ENCODE measurements at regions of chr12 and their contacts with region 1.

Region 1: GRCh38 chr12:118164798-118165486 is 29.0 kb downstream of the PEBP1 start:
- DNase-seq: no peak
- H3K4me3 ChIP-seq: no peak overlapping the region
- H3K27ac ChIP-seq: no peak overlapping the region
- H3K4me1 ChIP-seq: peaks cover 0 to 3% (median 0%) of the 10 kb centered on the region in 4 experiments; a peak in 1 of 7 replicates
- H3K27me3 ChIP-seq: no peaks in the 10 kb centered on the region
- CTCF ChIP-seq: peak; percentile 32 to 67 (median 65)
- EP300 ChIP-seq: no peak
- POLR2A ChIP-seq: no peak
- RAD21 ChIP-seq: peak; percentile 88 to 90

Region 2: DNA sequence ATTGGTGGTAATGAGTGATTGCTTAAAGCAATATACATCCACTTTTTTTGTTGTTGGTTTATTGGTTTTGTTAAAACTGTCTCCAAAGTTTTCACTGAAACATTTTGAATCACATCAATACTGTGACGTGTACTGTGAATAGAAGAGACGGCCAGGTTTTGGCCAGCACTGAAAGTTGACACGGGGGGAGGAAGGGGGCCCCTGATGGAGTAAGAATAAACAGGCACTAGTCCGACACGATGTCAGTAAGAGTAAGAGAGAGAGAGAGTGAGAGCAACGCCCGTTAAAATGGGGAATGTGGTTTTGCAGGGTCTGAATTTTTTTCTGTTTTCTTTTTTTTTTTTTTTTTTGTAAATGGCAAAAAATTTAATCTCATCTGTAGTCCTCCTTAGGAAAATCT is 14.3 kb before region 1 on chr12:
- CTCF ChIA-PET with region 1: interaction called, 37 read pairs
- POLR2A ChIA-PET with region 1: interaction called, 6 read pairs
- DNase-seq: no peak
- H3K4me3 ChIP-seq: no peak overlapping the region
- H3K27ac ChIP-seq: no peak overlapping the region
- H3K4me1 ChIP-seq: no peaks in the 10 kb centered on the region
- H3K27me3 ChIP-seq: no peaks in the 10 kb centered on the region
- CTCF ChIP-seq: no peak
- EP300 ChIP-seq: no peak
- POLR2A ChIP-seq: no peak
- RAD21 ChIP-seq: no peak

Region 3: DNA sequence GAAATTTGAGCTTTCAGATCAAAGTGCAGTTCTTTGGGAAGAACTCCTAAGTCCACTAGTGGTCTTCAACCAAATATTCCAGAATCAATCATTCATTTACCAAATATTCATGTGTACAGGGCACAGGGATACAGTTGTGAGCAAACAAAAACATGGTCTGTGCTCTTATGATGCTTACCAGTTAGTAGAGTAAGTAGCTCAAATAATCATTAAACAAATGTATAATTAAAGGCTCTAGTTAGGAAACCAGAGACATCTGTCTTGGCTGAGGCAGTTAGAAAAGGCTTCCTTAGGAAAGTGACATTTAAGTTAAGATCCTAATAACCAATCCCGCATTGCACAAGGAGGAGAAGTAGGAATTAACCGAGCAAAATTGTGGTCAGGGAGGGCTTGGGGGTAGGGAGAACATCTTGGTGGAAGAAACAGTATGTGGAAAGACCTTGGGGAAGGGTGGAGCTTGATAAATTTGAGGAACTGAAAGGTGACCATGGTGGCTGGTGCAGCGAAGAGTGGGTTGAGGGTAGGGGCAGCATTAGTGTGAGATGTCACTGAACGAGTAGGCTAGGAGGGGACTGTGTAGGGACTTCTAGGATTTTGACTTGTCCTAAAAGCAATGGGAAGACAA is 11.0 kb after region 1 on chr12:
- CTCF ChIA-PET with region 1: interaction called, 68 read pairs
- POLR2A ChIA-PET with region 1: no interaction called
- DNase-seq: no peak
- H3K4me3 ChIP-seq: no peak overlapping the region
- H3K27ac ChIP-seq: no peak overlapping the region
- H3K4me1 ChIP-seq: no peaks in the 10 kb centered on the region
- H3K27me3 ChIP-seq: no peaks in the 10 kb centered on the region
- CTCF ChIP-seq: no peak
- EP300 ChIP-seq: no peak
- POLR2A ChIP-seq: no peak
- RAD21 ChIP-seq: no peak

Region 4: GRCh38 chr12:118187751-118188435 is 23.0 kb after region 1 on chr12:
- CTCF ChIA-PET with region 1: interaction called, 68 read pairs
- POLR2A ChIA-PET with region 1: no interaction called
- DNase-seq: no peak
- H3K4me3 ChIP-seq: no peak overlapping the region
- H3K27ac ChIP-seq: no peak overlapping the region
- H3K4me1 ChIP-seq: peaks cover 0 to 4% (median 3%) of the 10 kb centered on the region in 4 experiments; a peak in 5 of 7 replicates
- H3K27me3 ChIP-seq: no peaks in the 10 kb centered on the region
- CTCF ChIP-seq: no peak
- EP300 ChIP-seq: no peak
- POLR2A ChIP-seq: no peak
- RAD21 ChIP-seq: no peak

Measured in H1 (cell line).